Vagina (tissue), 2 donors: ENCODE measurements at regions of chr9 and their contacts with region 1.

Region 1: GRCh38 chr9:33374634-33375213 is 27.6 kb downstream of the AQP7 start:
- DNase-seq: no peak
- H3K4me3 ChIP-seq: no peak overlapping the region
- H3K27ac ChIP-seq: peak overlapping the region; percentile 49
- H3K4me1 ChIP-seq: peaks cover 19% of the 10 kb centered on the region
- H3K27me3 ChIP-seq: no peaks in the 10 kb centered on the region
- CTCF ChIP-seq: peak; percentile 64 to 83 (median 76)
- POLR2A ChIP-seq: no peak

Region 2: DNA sequence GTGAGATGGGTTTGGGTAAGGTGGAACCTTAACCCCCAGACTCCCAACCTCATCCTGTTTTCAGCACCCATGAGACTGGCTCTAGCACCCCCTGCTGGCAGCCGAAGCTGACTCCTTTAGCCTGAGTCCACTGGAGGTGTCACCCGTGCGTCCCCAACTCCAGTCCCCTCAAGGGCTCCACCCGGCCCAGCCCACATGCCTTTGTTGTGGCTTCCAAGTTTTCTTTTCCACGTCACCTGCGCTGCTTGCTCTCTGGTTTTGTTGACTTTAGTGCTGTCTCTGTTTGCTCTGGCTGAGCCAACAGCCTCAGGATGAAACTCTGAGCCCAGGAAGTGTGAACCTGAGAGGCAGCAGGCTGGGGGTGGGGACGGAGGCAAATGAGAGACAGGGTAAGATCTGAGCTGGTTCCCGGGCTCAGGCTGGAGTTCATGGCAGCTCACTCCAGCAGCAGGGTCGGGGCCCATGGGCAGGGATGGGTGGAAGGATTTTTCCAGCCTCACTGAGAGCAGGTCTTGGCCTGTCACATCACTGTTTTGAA is 40.8 kb after region 1 on chr9:
- intact Hi-C with region 1: loop called (anchors 5 kb)
- DNase-seq: no peak
- H3K4me3 ChIP-seq: no peak overlapping the region
- H3K27ac ChIP-seq: peak overlapping the region; percentile 31
- H3K4me1 ChIP-seq: peaks cover 48% of the 10 kb centered on the region
- H3K27me3 ChIP-seq: no peaks in the 10 kb centered on the region
- CTCF ChIP-seq: peak; percentile 47 to 64 (median 48)
- POLR2A ChIP-seq: no peak

Region 3: GRCh38 chr9:33466565-33467495 is 92.1 kb after region 1 on chr9:
- intact Hi-C with region 1: loop called (anchors 5 kb)
- DNase-seq: peak in 1 of 2 donors; percentile 82
- H3K4me3 ChIP-seq: no peak overlapping the region
- H3K27ac ChIP-seq: no peak overlapping the region
- H3K4me1 ChIP-seq: peaks cover 2% of the 10 kb centered on the region
- H3K27me3 ChIP-seq: no peaks in the 10 kb centered on the region
- CTCF ChIP-seq: peak; percentile 74 to 84 (median 81)
- POLR2A ChIP-seq: no peak

Region 4: GRCh38 chr9:34825775-34826174 is 1451.1 kb after region 1 on chr9:
- intact Hi-C with region 1: no loop called
- DNase-seq: no peak
- H3K4me3 ChIP-seq: no peak overlapping the region
- H3K27ac ChIP-seq: no peak overlapping the region
- H3K4me1 ChIP-seq: no peaks in the 10 kb centered on the region
- H3K27me3 ChIP-seq: no peaks in the 10 kb centered on the region
- CTCF ChIP-seq: no peak
- POLR2A ChIP-seq: no peak